Activated T-helper 2 cell treated with anti-CD3 and anti-CD28 coated beads, Interferon-gamma antibody, Interleukin-2, Interleukin-4, amounts not matched to agents 10 μg/mL and 5 μg/mL and 100 μg/mL, durations not matched to agents 14 hours and 24 hours and 36 hours (primary cell): ENCODE measurements at regions of chr19 and their contacts with region 1.

Region 1: GRCh38 chr19:19597809-19598306 is 20.6 kb downstream of the PBX4 start:
- DNase-seq: peak; percentile 70
- H3K4me3 Mint-ChIP-seq: peak overlapping the region; percentile 73
- H3K27ac Mint-ChIP-seq: peak overlapping the region; percentile 99
- H3K4me1 Mint-ChIP-seq: peaks cover 59% of the 10 kb centered on the region
- H3K27me3 Mint-ChIP-seq: no peaks in the 10 kb centered on the region

Region 2: GRCh38 chr19:19349365-19349905 is 248.4 kb before region 1 on chr19:
- intact Hi-C with region 1: no loop called
- DNase-seq: no peak
- H3K4me3 Mint-ChIP-seq: no peak overlapping the region
- H3K27ac Mint-ChIP-seq: no peak overlapping the region
- H3K4me1 Mint-ChIP-seq: no peaks in the 10 kb centered on the region
- H3K27me3 Mint-ChIP-seq: no peaks in the 10 kb centered on the region

Region 3: GRCh38 chr19:19385108-19385899 is 212.6 kb before region 1 on chr19:
- intact Hi-C with region 1: loop called (anchors 5 kb)
- DNase-seq: peak; percentile 100
- H3K4me3 Mint-ChIP-seq: peak overlapping the region; percentile 84
- H3K27ac Mint-ChIP-seq: peak overlapping the region; percentile 91
- H3K4me1 Mint-ChIP-seq: peaks cover 39% of the 10 kb centered on the region
- H3K27me3 Mint-ChIP-seq: no peaks in the 10 kb centered on the region

Region 4: DNA sequence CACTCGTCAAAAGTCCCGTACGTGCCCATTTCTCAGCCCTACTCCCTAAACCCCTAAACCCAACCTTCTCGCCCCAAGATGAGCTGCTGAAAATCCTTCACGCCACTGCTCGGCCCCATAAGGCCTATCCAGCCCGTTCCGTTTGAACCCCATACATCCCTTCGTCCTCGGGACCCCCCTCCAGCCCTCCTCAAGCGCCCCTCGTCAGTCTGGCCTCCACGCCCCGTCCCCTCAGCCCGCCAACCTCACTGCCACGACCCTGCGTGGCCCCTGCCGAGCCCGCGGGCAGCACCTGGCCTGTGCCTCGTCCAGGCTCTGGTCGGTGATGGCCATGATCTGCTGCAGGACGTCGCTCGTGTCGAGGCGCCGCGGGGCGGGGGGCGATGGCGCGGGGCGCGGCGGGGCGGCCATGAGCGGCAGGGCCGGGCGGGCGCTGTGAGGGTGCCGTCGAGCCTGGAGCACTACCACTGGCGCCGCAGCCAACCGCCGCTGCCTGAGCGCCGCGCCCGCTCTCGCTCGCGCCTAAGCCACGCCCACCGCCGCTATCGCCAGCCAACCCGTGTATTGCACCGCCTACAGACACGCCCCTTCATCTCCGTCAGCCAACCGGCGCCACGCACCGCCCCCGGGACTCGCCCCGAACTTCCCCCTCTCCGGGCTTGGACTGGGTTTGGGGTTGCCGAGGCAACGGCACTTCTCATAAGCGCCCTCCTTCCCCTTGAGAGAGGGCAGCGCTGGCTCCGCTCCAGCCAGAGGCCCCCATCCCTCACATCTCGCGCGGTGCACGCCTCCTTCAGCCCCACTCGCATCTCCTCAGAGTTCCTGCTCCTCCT is 20.6 kb after region 1 on chr19 and contains the start of gene PBX4:
- intact Hi-C with region 1: loop called (anchors 1 kb)
- DNase-seq: peak; percentile 99
- H3K4me3 Mint-ChIP-seq: peak within 1 kb of the TSS; percentile 91
- H3K27ac Mint-ChIP-seq: peak within 1 kb of the TSS; percentile 87
- H3K4me1 Mint-ChIP-seq: peaks cover 33% of the 10 kb centered on the region
- H3K27me3 Mint-ChIP-seq: no peaks in the 10 kb centered on the region
- total RNA-seq, gene PBX4: 23.4 and 24.8 TPM in 2 replicates